Activated CD4-positive, alpha-beta memory T cell treated with anti-CD3 and anti-CD28 coated beads, Interleukin-2, amount 10 ng/mL, durations not matched to agents 7 days and 5 days (primary cell): ENCODE measurements at regions of chr19 and their contacts with region 1.

Region 1: GRCh38 chr19:16330368-16330801 is 5.8 kb downstream of the KLF2 start:
- DNase-seq: peak; percentile 97
- H3K4me3 Mint-ChIP-seq: peak overlapping the region; percentile 99
- H3K27ac Mint-ChIP-seq: peak overlapping the region; percentile 97
- H3K4me1 Mint-ChIP-seq: peaks cover 58% of the 10 kb centered on the region
- H3K27me3 Mint-ChIP-seq: peaks cover 11% of the 10 kb centered on the region

Region 2: GRCh38 chr19:16252459-16253205 is 77.8 kb before region 1 on chr19:
- CTCF ChIA-PET with region 1: interaction called, 46 read pairs
- POLR2A ChIA-PET with region 1: interaction called, 68 read pairs
- DNase-seq: no peak
- H3K4me3 Mint-ChIP-seq: no peak overlapping the region
- H3K27ac Mint-ChIP-seq: no peak overlapping the region
- H3K4me1 Mint-ChIP-seq: peaks cover 32% of the 10 kb centered on the region
- H3K27me3 Mint-ChIP-seq: peaks cover 3% of the 10 kb centered on the region

Region 3: GRCh38 chr19:16266586-16266942 is 63.8 kb before region 1 on chr19:
- CTCF ChIA-PET with region 1: interaction called, 3 read pairs
- POLR2A ChIA-PET with region 1: interaction called, 68 read pairs
- DNase-seq: peak; percentile 86
- H3K4me3 Mint-ChIP-seq: peak overlapping the region; percentile 2
- H3K27ac Mint-ChIP-seq: peak overlapping the region; percentile 76
- H3K4me1 Mint-ChIP-seq: peaks cover 62% of the 10 kb centered on the region
- H3K27me3 Mint-ChIP-seq: peaks cover 11% of the 10 kb centered on the region

Region 4: GRCh38 chr19:16301999-16302694 is 28.2 kb before region 1 on chr19:
- CTCF ChIA-PET with region 1: no interaction called
- POLR2A ChIA-PET with region 1: no interaction called
- DNase-seq: no peak
- H3K4me3 Mint-ChIP-seq: no peak overlapping the region
- H3K27ac Mint-ChIP-seq: no peak overlapping the region
- H3K4me1 Mint-ChIP-seq: no peaks in the 10 kb centered on the region
- H3K27me3 Mint-ChIP-seq: peaks cover 5% of the 10 kb centered on the region

Region 5: GRCh38 chr19:16371540-16371986 is 41.2 kb after region 1 on chr19:
- CTCF ChIA-PET with region 1: interaction called, 109 read pairs
- POLR2A ChIA-PET with region 1: interaction called, 3,221 read pairs
- DNase-seq: peak; percentile 96
- H3K4me3 Mint-ChIP-seq: no peak overlapping the region
- H3K27ac Mint-ChIP-seq: no peak overlapping the region
- H3K4me1 Mint-ChIP-seq: peaks cover 7% of the 10 kb centered on the region
- H3K27me3 Mint-ChIP-seq: peaks cover 2% of the 10 kb centered on the region